ENCODE measurements at regions of chr12 and their contacts with region 1.

Region 1: DNA sequence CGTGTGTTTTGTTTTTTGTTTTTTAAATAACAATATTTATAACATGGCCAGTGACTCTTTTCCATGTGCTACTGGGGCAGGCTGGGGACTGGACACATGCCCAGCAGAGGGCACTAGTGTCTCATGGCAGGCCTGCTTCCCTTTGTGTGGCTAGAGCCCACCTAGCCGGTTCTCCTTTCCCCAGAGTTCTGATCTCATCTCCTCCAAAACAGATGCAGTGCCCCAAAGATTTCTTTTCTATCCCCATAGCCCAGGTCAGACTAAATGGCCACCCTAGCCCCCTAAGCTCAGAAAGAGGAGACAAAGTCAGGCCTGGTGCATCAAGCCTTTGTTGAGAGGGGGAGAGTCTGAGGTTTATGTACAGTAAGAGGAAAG is 21.2 kb downstream of the PRPF40B start:
- DNase-seq: peak; percentile 76 to 88 (median 78)
- ATAC-seq: peak; percentile 83
- H3K4me3 ChIP-seq: no peak overlapping the region
- H3K4me1 ChIP-seq: no peaks in the 10 kb centered on the region
- CTCF ChIP-seq: peak; percentile 80

Region 2: DNA sequence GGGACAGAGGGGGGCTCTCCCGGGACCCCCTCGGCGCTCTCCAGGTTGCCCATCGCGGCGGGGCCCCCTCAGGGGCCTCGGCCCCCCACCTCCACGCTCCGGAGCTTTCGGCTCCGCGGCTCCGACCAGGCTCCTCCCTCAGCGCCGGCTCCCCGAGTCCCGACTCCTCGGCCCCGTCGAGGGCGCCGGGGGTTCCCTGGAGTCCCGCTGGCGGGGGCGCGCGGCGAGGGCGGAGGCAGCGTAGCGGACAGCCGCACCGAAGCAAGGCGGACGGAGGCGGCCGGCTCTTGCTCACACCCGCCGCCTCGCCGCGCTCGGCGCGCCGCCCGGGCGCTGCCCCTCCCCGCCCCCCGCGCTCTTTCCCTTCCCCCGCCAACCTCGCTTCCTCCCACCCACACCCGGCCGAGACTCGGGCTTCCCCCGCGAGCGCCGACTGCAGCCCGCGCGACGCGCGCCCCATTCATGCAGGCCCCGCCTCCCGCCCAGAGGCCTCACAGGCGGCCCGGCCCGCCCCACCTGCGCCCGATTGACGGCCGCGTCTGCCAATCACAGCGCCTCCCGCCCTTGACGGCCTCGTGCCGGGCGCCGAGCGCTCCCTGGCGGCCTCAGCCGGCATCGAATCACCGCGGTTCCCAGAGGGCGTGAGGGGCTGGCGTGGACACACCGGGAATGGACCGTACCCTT is 62.7 kb after region 1 on chr12 and contains the start of gene FMNL3:
- intact Hi-C with region 1: loop called (anchors 2 to 5 kb)
- DNase-seq: peak; percentile 98 to 99 (median 98)
- ATAC-seq: peak; percentile 99
- H3K4me3 ChIP-seq: peak within 1 kb of the TSS; percentile 30
- H3K4me1 ChIP-seq: no peaks in the 10 kb centered on the region
- CTCF ChIP-seq: peak; percentile 95
- total RNA-seq, gene FMNL3: 4.2 to 13.4 (median 7.1) TPM

Region 3: DNA sequence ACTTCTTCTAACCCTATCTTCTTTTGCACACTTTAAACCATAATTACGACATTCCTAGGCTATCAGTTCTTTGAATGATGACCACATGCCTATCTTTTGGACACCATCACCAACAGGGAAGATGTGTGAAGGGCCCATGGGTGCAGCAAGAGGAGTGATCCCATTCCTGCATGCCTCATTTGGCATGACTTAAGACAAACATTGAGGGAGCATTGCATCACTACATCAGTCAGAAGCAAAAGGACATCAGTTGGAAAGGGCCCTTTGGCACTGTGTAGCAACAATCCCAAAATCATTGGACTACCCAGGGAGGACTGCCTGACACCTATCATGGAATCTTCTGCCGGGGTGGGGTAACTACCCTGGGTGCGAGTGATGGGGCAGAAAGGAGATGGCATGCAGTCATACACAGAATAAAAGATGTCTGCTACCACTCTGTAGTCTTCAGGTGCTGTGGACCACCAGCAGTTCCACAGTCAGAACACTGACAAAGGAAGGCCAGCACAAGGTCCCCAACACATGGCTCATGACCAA is 86.0 kb after region 1 on chr12:
- intact Hi-C with region 1: no loop called
- DNase-seq: no peak
- ATAC-seq: no peak
- H3K4me3 ChIP-seq: no peak overlapping the region
- H3K4me1 ChIP-seq: no peaks in the 10 kb centered on the region
- CTCF ChIP-seq: no peak